ENCODE measurements at regions of chr20 and their contacts with region 1.

Region 1: DNA sequence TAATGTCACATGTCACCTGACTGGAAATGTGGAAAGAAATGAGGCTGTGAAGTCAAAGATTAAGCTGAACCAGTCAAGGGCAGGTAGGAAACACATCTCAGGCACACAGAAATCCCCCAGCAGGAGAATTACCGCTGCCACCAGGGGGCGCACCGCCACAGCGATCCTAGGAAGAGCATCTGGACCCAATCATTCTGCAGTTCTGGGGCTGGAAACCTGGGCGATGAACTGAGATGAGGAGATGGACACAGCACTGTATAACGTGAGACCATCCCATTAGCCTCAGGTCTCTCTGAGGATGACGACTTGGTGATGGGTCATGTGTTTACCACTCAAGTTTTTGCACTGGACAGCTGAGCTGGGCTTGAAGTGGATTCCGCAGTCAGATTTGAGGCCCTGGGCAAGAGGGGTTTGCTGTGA is 6.5 kb upstream of the SLC24A3 start:
- DNase-seq: peak; percentile 84
- ATAC-seq: peak; percentile 57
- H3K4me3 Mint-ChIP-seq: no peak overlapping the region
- H3K27ac Mint-ChIP-seq: no peak overlapping the region
- H3K4me1 Mint-ChIP-seq: no peaks in the 10 kb centered on the region
- H3K27me3 Mint-ChIP-seq: peaks cover 28% of the 10 kb centered on the region

Region 2: DNA sequence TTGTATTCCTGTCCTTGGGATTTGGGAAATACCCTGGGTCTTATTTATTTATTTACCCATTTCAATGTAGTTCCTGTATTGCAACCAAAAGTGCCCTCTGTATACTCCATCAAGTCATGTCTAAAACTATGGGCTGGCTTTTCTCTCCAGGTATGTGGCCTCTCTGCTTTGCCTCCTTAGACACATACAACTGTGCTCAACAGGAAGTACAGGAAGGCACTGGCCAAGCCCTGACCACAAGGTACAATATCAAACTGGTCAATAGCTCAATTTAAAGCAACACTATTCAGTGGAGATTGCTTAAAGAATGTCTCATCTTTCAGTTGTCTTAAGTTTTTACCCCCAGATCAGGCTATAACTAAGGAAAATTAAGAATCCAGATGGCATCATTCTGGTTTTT is 35.8 kb before region 1 on chr20:
- CTCF ChIA-PET with region 1: no interaction called
- POLR2A ChIA-PET with region 1: no interaction called
- intact Hi-C with region 1: no loop called
- DNase-seq: no peak
- ATAC-seq: no peak
- H3K4me3 Mint-ChIP-seq: no peak overlapping the region
- H3K27ac Mint-ChIP-seq: no peak overlapping the region
- H3K4me1 Mint-ChIP-seq: no peaks in the 10 kb centered on the region
- H3K27me3 Mint-ChIP-seq: peaks cover 10% of the 10 kb centered on the region

Region 3: GRCh38 chr20:19566226-19566965 is 360.4 kb after region 1 on chr20:
- CTCF ChIA-PET with region 1: no interaction called
- POLR2A ChIA-PET with region 1: no interaction called
- intact Hi-C with region 1: no loop called
- DNase-seq: no peak
- ATAC-seq: no peak
- H3K4me3 Mint-ChIP-seq: no peak overlapping the region
- H3K27ac Mint-ChIP-seq: no peak overlapping the region
- H3K4me1 Mint-ChIP-seq: no peaks in the 10 kb centered on the region
- H3K27me3 Mint-ChIP-seq: no peaks in the 10 kb centered on the region

Region 4: DNA sequence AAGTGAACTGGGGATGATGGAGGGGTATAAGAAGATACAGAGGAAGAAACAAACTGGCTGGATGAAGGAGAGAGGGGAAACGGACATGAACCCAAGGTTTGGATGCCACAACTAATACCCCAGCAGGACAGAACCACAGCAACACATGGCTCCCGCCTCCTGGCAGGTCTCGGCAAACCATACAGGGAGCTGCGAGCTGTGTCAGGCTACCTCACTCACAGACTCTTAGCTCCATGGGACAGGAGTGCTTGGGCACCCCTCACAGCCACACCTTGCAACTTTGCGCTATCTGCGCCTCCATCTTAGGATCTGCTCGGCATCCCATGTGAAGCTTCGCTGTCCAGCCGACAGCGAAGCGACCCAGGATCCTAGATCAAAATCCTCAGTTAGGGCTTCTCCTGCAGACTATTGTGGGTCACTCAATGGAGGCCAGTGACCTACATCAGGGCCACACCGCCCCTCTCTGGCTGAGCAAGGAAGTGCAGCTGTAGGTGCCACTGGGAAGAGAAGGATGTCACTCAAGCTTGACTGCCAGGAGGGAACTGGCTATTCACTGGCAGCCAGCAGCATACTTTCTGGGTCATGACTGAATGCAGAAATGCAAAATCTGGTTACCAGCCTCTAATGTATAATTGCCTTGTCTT is 377.7 kb after region 1 on chr20:
- CTCF ChIA-PET with region 1: interaction called, 19 read pairs
- POLR2A ChIA-PET with region 1: no interaction called
- intact Hi-C with region 1: loop called (anchors 1 kb)
- DNase-seq: peak; percentile 71
- ATAC-seq: no peak
- H3K4me3 Mint-ChIP-seq: no peak overlapping the region
- H3K27ac Mint-ChIP-seq: no peak overlapping the region
- H3K4me1 Mint-ChIP-seq: no peaks in the 10 kb centered on the region
- H3K27me3 Mint-ChIP-seq: no peaks in the 10 kb centered on the region

Region 5: DNA sequence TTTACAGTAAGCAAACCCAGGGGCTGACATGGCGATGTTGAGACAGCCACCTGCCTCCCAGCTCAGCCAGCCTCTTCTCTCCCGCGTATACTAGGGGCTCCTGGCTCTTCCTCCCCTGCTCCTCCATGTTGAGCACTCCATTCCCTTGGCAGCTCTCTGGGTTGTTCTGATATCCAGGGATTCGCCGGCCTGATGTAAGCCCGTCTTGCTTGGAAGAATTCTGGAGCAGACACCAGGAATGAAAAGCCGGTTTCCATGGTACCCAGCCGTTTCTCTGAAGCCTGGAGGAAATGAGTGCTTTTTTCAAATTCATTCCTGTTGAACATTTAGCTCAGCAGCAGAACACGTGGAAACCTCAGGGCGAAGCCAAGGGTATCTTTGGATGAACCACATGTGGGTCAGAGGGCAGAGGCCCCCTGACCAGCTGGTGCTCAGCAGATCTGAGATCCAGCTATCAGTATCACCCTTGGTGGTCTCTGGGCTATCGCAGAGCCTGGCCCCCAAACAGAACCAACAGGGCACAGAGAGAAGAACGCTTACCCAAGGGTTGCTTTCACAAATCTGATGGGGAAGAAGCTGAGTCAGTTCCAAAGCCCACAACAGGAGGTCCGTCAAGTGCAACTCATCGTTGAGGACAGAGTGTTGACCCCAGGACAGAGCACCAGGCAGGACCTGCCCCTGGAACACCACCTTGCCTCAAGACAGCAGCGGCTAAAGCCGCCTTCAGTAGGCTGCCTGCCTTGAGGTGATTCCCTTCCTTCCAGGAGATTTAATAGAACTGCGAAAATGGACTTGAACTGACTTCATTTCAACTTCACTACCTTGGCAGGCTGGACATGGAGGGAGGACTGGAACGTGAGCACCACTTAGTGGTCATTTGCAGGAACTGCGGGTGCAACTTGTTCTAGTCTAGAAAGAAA is 456.0 kb after region 1 on chr20:
- CTCF ChIA-PET with region 1: interaction called, 31 read pairs
- POLR2A ChIA-PET with region 1: no interaction called
- intact Hi-C with region 1: loop called (anchors 1 kb)
- DNase-seq: peak; percentile 69
- ATAC-seq: peak; percentile 47
- H3K4me3 Mint-ChIP-seq: no peak overlapping the region
- H3K27ac Mint-ChIP-seq: no peak overlapping the region
- H3K4me1 Mint-ChIP-seq: peaks cover 2% of the 10 kb centered on the region
- H3K27me3 Mint-ChIP-seq: peaks cover 25% of the 10 kb centered on the region